Panc1 (cell line): ENCODE measurements at regions of chr1 and their contacts with region 1.

Region 1: DNA sequence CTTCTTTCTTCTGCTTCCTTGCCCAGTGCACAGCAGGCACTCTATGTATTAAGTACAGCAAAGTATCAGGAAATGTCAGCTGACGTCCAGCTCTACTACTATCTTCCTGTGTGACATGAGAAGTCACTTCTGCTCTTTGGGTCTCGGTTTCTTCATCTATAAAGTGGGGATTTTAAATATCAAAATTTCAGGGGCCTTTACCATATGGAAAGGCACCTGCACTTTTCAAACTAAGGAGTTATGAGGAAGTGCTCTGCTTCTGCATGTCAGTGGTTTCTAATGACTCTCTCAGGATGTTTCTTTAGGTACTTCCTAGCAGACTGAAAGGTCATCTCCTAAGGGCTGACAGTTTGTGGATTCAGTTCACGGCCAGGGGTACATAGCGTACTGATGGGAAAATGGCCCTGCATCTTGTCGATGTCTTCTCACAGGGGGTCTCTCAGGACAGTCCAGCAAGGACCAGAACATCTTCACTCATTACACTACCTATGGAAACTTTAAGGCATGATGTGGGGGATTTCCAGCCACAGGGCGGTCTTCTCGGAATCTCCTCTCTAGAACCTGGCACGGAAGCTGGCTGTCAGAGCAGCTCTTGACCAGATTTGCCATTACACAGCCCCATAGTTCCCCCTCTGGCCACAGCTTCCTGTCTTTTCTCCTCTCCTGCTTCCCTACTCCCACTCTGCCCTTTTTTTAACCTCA is 42.0 kb upstream of the MTF1 start:
- DNase-seq: no peak
- ATAC-seq: no peak
- H3K4me3 ChIP-seq: no peak overlapping the region
- H3K27ac ChIP-seq: no peak overlapping the region
- H3K4me1 ChIP-seq: no peaks in the 10 kb centered on the region
- H3K27me3 ChIP-seq: no peaks in the 10 kb centered on the region
- CTCF ChIP-seq: no peak

Region 2: DNA sequence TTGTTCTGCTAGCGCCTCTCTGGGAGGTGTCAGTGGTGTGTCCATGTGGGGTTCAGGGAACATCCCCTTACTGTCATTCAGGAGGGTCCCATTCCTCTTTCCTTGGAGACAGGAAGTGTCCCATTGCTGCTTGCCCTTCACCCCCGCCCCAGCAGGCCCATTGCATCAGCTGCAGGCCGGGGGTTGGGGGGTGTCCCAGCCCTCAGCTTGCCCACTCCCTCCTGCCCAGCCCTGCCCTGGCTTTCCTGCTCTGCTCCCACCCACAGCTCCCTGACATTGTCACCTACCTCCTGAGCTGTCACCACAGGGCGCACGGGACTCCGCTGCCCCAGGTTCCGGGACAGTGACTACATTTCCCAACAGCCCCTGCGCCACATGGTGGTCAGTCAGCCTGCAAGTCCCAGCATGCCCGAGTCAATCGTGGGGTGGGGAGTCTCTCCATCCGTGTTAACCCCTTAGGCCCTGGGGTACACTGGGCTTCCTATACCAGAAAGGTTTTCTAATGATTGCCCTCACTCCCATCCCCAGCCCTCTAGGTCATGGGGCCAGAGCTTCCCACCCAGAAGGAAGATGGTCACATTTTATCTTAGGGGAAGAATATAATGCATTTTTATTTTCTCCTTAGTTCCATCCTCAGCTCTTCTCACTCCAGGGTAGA is 45.5 kb after region 1 on chr1 and contains the start of gene INPP5B:
- CTCF ChIA-PET with region 1: no interaction called
- POLR2A ChIA-PET with region 1: interaction called, 10 read pairs
- in situ Hi-C with region 1: no loop called
- intact Hi-C with region 1: no loop called
- DNase-seq: no peak
- ATAC-seq: peak; percentile 94
- H3K4me3 ChIP-seq: peak within 1 kb of the TSS; percentile 54 to 88
- H3K27ac ChIP-seq: peak within 1 kb of the TSS; percentile 84
- H3K4me1 ChIP-seq: peaks cover 7% of the 10 kb centered on the region
- H3K27me3 ChIP-seq: no peaks in the 10 kb centered on the region
- CTCF ChIP-seq: no peak
- total RNA-seq, gene INPP5B: 17.7 TPM

Region 3: DNA sequence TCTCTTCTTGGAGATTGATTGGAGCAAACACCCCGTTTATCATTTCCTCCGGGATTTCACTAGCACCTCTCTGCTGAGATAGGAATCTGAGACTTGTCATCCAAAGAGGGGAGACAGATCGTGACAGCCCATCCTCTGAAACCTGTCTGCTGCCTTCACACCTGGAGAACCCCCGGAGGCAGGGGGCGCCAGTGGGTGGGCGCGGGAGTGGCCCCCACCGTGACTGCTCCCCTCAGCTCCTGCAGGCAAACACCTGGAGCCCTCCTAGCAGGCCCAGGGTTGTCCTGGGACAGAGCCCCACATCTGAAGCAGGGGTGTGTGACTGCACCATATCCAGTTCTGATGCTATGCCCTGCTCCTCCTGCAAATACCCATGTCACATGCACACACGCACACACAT is 354.7 kb after region 1 on chr1:
- CTCF ChIA-PET with region 1: no interaction called
- POLR2A ChIA-PET with region 1: no interaction called
- in situ Hi-C with region 1: no loop called
- intact Hi-C with region 1: no loop called
- DNase-seq: no peak
- ATAC-seq: no peak
- H3K4me3 ChIP-seq: no peak overlapping the region
- H3K27ac ChIP-seq: no peak overlapping the region
- H3K4me1 ChIP-seq: no peaks in the 10 kb centered on the region
- H3K27me3 ChIP-seq: peaks cover 3% of the 10 kb centered on the region
- CTCF ChIP-seq: no peak